Uterus (tissue), 4 donors: ENCODE measurements at regions of chr6 and their contacts with region 1.

Region 1: GRCh38 chr6:18053078-18053477 is 65.6 kb upstream of the KIF13A start:
- DNase-seq: no peak
- H3K4me3 ChIP-seq: no peak overlapping the region
- H3K27ac ChIP-seq: no peak overlapping the region
- H3K4me1 ChIP-seq: no peaks in the 10 kb centered on the region
- H3K27me3 ChIP-seq: no peaks in the 10 kb centered on the region
- CTCF ChIP-seq: no peak
- POLR2A ChIP-seq: no peak

Region 2: GRCh38 chr6:18088419-18089296 is 35.6 kb after region 1 on chr6:
- intact Hi-C with region 1: loop called (anchors 2 kb)
- DNase-seq: no peak
- H3K4me3 ChIP-seq: no peak overlapping the region
- H3K27ac ChIP-seq: no peak overlapping the region
- H3K4me1 ChIP-seq: no peaks in the 10 kb centered on the region
- H3K27me3 ChIP-seq: no peaks in the 10 kb centered on the region
- CTCF ChIP-seq: no peak
- POLR2A ChIP-seq: no peak

Region 3: GRCh38 chr6:18155150-18155863 is 102.2 kb after region 1 on chr6 and contains the start of gene KDM1B:
- intact Hi-C with region 1: no loop called
- DNase-seq: peak; percentile 98 to 99
- H3K4me3 ChIP-seq: peak within 1 kb of the TSS; percentile 88 to 98
- H3K27ac ChIP-seq: peak within 1 kb of the TSS; percentile 86 to 94
- H3K4me1 ChIP-seq: no peaks in the 10 kb centered on the region
- H3K27me3 ChIP-seq: no peaks in the 10 kb centered on the region
- CTCF ChIP-seq: no peak
- POLR2A ChIP-seq: peak; percentile 80 to 85
- total RNA-seq, gene KDM1B: 10.6 to 24.7 (median 14.0) TPM